Uterus (tissue), 4 donors: ENCODE measurements at regions of chr1 and their contacts with region 1.

Region 1: DNA sequence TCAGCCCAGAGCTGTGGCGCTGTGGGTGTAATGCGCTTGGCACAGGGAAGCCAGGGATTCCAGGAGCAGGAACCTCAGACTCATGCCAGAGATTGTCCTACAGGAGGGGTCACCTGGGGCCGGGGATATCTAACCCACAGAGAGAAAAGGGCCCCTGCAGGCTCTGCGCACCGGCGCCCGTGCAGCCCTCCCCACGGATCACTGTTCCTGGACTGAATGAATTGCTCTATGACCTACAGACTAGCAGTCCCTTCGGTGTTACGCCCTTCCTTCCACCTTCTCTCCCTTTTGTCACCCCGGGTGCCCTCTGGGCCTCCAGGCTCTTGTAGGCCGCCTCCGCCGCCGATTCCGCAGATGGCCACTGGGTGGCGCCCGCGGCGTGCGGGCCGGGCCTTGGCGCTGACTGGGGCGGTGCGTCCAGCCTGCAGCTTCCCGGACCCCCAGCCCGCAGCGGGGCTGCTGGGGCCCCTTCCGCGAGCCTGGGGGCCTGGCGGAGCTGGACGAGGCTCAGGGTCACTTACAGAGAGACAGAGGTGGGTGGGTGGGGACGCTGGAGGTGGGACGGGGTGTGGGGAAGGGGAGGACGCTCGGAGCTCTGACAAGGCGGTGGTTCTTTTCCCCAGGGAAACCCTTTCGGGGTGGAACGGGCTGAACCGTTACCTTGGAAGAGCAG is 101.3 kb downstream of the IER5 start:
- DNase-seq: peak; percentile 24 to 58
- H3K4me3 ChIP-seq: peak overlapping the region in 1 of 2 donors; percentile 24
- H3K27ac ChIP-seq: no peak overlapping the region
- H3K4me1 ChIP-seq: no peaks in the 10 kb centered on the region
- H3K27me3 ChIP-seq: no peaks in the 10 kb centered on the region
- CTCF ChIP-seq: peak; percentile 84 to 95 (median 88)
- POLR2A ChIP-seq: no peak

Region 2: DNA sequence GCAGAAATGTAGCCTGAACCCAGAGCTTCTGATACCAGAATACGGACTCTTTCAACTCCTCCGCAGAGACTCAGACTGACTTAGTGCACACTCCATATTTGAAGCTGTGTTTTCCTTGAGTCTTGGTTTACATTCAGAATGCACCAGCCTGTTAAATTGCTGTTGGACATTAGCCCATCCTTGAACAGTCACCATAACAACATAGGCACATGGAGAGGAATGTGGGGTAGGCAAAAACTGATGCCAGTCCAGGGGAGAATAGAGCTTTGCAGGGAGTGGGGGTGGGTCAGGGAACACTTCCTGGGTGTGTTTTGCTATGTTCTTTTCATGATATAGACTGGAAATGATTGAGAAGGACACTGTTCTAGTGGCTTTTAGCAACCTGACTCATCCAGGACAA is 217.2 kb after region 1 on chr1:
- intact Hi-C with region 1: no loop called
- DNase-seq: no peak
- H3K4me3 ChIP-seq: no peak overlapping the region
- H3K27ac ChIP-seq: no peak overlapping the region
- H3K4me1 ChIP-seq: no peaks in the 10 kb centered on the region
- H3K27me3 ChIP-seq: no peaks in the 10 kb centered on the region
- CTCF ChIP-seq: no peak
- POLR2A ChIP-seq: no peak

Region 3: GRCh38 chr1:181424786-181425403 is 235.1 kb after region 1 on chr1:
- intact Hi-C with region 1: loop called (anchors 10 kb)
- DNase-seq: peak; percentile 50 to 55
- H3K4me3 ChIP-seq: no peak overlapping the region
- H3K27ac ChIP-seq: no peak overlapping the region
- H3K4me1 ChIP-seq: no peaks in the 10 kb centered on the region
- H3K27me3 ChIP-seq: no peaks in the 10 kb centered on the region
- CTCF ChIP-seq: peak; percentile 83 to 90 (median 85)
- POLR2A ChIP-seq: no peak